ENCODE measurements at regions of chr1 and their contacts with region 1.

Region 1: DNA sequence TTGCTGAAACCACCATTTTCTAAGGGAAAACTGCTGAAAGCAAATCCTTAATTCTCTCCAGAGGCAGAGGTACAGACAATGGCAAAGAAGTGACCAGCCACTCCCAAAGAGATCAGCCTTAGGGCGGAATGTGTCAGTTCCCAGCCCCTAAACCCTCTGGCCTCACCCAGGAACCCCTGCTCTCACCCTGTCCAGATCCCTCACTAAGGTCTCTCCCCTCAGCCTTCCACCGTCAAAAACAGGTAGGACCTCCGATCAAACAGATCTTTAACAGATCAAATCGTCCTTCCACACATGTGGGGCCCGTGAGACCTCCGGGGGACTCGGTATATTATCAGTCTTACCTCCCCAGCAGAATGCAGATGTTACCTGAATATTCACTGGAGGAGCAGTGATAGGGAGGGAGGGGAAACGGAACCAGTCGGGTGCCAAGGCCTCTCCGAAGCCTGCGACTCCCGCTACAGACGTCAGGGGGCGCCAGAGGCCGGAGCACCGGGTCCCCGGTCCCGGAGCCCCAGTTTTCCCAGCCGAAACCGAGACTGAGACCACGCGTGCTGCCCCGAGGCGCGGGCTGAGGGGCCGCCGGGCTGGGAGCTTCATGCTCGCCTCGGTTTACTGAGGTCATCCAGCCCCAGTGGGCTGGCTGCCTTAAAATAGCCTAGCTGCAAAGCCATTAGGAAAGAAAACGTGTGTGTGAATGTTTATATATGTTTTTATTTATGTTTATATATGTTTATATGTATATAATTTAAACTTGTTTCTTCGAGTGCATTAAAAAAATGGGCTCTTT is 23.6 kb downstream of the GPA33 start:
- DNase-seq: peak; percentile 68
- H3K4me3 Mint-ChIP-seq: peak overlapping the region; percentile 31
- H3K27ac Mint-ChIP-seq: no peak overlapping the region
- H3K4me1 Mint-ChIP-seq: no peaks in the 10 kb centered on the region
- H3K27me3 Mint-ChIP-seq: no peaks in the 10 kb centered on the region

Region 2: GRCh38 chr1:167121375-167122120 is 55.0 kb after region 1 on chr1:
- intact Hi-C with region 1: loop called (anchors 1 kb)
- DNase-seq: peak; percentile 13
- H3K4me3 Mint-ChIP-seq: peak overlapping the region; percentile 80
- H3K27ac Mint-ChIP-seq: no peak overlapping the region
- H3K4me1 Mint-ChIP-seq: peaks cover 6% of the 10 kb centered on the region
- H3K27me3 Mint-ChIP-seq: peaks cover 8% of the 10 kb centered on the region

Region 3: DNA sequence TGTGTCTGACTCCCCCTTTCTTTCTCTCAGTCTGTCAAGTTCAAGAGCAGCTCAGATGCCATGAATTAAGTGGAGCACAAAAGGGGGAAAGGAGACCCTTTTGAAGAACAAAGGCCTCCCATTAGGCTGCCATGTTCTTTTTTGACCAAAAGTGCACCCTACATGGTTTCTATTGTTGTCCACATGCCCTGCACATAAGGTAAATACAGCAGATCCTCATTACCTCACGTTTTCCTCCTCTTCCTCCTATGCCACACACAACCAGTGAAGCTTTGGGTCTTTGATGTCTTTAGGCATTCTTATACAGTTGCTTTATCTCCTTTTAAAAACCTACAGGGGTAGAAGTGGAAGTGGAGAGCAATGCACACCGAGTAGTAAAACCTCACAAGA is 201.9 kb after region 1 on chr1:
- intact Hi-C with region 1: loop called (anchors 5 kb)
- DNase-seq: no peak
- H3K4me3 Mint-ChIP-seq: no peak overlapping the region
- H3K27ac Mint-ChIP-seq: no peak overlapping the region
- H3K4me1 Mint-ChIP-seq: peaks cover 20% of the 10 kb centered on the region
- H3K27me3 Mint-ChIP-seq: no peaks in the 10 kb centered on the region

Region 4: DNA sequence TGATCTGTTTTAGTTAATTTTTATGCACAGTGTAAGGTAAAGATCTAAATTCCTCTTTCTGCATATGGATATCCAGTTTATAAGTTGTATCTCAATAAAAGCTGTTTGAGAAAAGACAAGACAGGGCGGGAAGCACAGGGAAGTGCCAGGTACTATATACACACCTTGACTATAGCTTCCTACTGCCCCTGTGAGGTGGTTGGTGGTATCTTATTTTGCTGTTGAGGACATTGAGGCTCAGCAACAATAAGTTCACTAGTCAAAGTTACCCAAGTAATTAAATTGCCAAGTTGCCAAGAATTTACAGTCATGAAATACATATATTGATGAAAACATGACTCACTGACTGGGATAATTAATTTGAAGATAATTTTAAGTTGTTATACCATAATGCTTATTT is 342.7 kb after region 1 on chr1:
- intact Hi-C with region 1: loop called (anchors 2 kb)
- DNase-seq: no peak
- H3K4me3 Mint-ChIP-seq: no peak overlapping the region
- H3K27ac Mint-ChIP-seq: no peak overlapping the region
- H3K4me1 Mint-ChIP-seq: peaks cover 16% of the 10 kb centered on the region
- H3K27me3 Mint-ChIP-seq: no peaks in the 10 kb centered on the region

Region 5: DNA sequence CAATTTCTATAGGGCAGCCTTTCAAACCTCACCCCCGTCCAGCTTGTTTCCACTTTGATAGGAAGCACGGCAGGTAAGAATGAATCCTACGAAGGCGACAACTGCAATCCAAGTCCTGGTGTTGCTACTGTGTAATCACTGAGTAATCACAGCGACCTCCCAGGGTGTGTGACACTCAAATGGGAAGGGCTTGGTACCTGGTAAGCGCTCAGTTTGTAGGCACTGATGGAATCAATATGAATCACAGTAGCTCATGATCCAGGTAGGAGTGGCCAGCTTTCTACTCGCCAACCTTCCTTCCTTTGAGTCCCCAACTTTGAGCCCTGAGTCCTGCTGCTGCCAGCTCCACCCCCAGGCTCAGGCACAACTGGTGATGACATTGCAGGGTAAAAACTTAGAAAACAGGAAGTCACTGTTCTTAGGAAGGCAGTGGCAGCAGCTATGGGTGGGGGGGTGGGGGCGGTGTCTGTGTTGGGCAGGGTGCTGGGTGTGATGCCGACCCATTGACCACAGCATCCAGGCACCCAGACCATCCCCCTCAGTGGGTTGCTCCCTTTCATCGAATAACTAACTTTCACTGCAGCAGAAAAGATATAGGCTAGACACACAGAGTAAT is 381.1 kb after region 1 on chr1:
- intact Hi-C with region 1: loop called (anchors 1 kb)
- DNase-seq: peak; percentile 70
- H3K4me3 Mint-ChIP-seq: peak overlapping the region; percentile 68
- H3K27ac Mint-ChIP-seq: peak overlapping the region; percentile 90
- H3K4me1 Mint-ChIP-seq: peaks cover 77% of the 10 kb centered on the region
- H3K27me3 Mint-ChIP-seq: no peaks in the 10 kb centered on the region

Region 6: GRCh38 chr1:167553136-167554027 is 486.9 kb after region 1 on chr1 and contains the start of gene CREG1:
- intact Hi-C with region 1: loop called (anchors 1 kb)
- DNase-seq: peak; percentile 89
- H3K4me3 Mint-ChIP-seq: peak within 1 kb of the TSS; percentile 86
- H3K27ac Mint-ChIP-seq: peak within 1 kb of the TSS; percentile 4
- H3K4me1 Mint-ChIP-seq: peaks cover 40% of the 10 kb centered on the region
- H3K27me3 Mint-ChIP-seq: peaks cover 1% of the 10 kb centered on the region
- total RNA-seq, gene CREG1: 15.3 and 16.8 TPM in 2 replicates

Measured in activated T-helper 1 cell treated with anti-CD3 and anti-CD28 coated beads, Interleukin-12 subunit alpha, Interleukin-12 subunit beta, Interleukin-2, Interleukin-4 antibody, amounts not matched to agents 30 ng/mL and 10 ng/mL and 1 ng/mL, durations not matched to agents 14 hours and 24 hours and 36 hours (primary cell).